ENCODE measurements at regions of chr2 and their contacts with region 1.

Region 1: GRCh38 chr2:72150157-72150865 is 2.6 kb upstream of the CYP26B1 start:
- DNase-seq: peak in 9 of 10 donors; percentile 61 to 90 (median 77)
- H3K4me3 ChIP-seq: peak overlapping the region; percentile 11 to 73 (median 57)
- H3K27ac ChIP-seq: peak overlapping the region in 4 of 59 donors; percentile 2 to 32 (median 22)
- H3K27me3 ChIP-seq: peaks cover 0 to 46% (median 24%) of the 10 kb centered on the region in 45 donors
- CTCF ChIP-seq: peak; percentile 73 to 96 (median 91)

Region 2: GRCh38 chr2:71609958-71610357 is 540.4 kb before region 1 on chr2:
- intact Hi-C with region 1: loop called in 1 of 2 experiments (anchors 10 kb)
- DNase-seq: peak in 2 of 10 donors; percentile 7 to 14
- H3K4me3 ChIP-seq: no peak overlapping the region
- H3K27ac ChIP-seq: peak overlapping the region in 10 of 59 donors; percentile 3 to 58 (median 20)
- H3K27me3 ChIP-seq: no peaks in the 10 kb centered on the region
- CTCF ChIP-seq: peak in 54 of 56 donors; percentile 23 to 69 (median 46)

Region 3: DNA sequence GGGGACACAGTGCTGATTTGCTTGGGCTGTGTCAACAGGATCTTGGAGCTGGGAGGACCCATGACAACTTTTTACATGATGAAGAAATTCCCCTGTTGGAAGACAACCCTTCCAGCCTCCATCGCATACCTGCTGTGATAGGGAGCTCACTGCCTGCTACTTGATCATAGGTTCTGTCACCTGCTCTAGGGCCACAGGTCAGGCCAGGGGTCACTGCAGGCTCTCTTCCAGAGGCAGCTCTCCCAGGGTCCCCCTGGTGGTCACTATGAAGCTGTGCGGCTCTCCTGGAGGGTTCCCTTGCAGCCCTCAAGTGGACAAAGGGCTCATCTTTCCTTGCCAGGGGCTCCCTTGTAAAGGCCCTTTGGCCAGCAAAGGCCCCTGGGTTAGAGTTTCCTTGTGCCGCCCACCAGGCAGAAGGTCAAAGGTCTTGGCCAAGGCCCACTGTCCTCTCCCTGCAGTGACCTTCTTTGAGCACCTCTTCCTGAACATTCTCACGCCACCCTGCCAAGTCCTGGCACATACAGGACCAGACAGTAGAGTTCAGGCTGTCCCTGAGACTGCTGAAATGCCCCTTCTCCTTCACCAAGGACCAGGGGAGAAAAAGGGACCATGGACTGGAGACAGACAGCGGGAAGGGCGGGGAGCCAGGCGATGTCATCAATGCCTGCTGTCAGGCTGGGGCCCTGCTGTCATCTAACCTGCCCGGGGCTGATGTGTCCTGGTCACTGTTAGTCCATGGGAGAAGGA is 351.9 kb before region 1 on chr2:
- intact Hi-C with region 1: loop called (anchors 1 to 5 kb)
- DNase-seq: no peak
- H3K4me3 ChIP-seq: no peak overlapping the region
- H3K27ac ChIP-seq: no peak overlapping the region
- H3K27me3 ChIP-seq: peaks cover 0 to 5% (median 0%) of the 10 kb centered on the region in 45 donors
- CTCF ChIP-seq: peak in 55 of 56 donors; percentile 23 to 78 (median 66)

Region 4: GRCh38 chr2:72579591-72580180 is 429.4 kb after region 1 on chr2:
- intact Hi-C with region 1: loop called (anchors 5 to 10 kb)
- DNase-seq: no peak
- H3K4me3 ChIP-seq: no peak overlapping the region
- H3K27ac ChIP-seq: no peak overlapping the region
- H3K27me3 ChIP-seq: no peaks in the 10 kb centered on the region
- CTCF ChIP-seq: peak; percentile 56 to 90 (median 75)

Region 5: GRCh38 chr2:72887754-72888437 is 737.6 kb after region 1 on chr2:
- intact Hi-C with region 1: loop called in 1 of 2 experiments (anchors 10 kb)
- DNase-seq: peak; percentile 79 to 92 (median 87)
- H3K4me3 ChIP-seq: peak overlapping the region; percentile 54 to 82 (median 70)
- H3K27ac ChIP-seq: peak overlapping the region in 58 of 59 donors; percentile 36 to 97 (median 82)
- H3K27me3 ChIP-seq: no peaks in the 10 kb centered on the region
- CTCF ChIP-seq: peak; percentile 54 to 95 (median 88)

Measured in dorsolateral prefrontal cortex (tissue), 120 donors.